Psoas muscle (tissue), 8 donors: ENCODE measurements at regions of chr4 and their contacts with region 1.

Region 1: DNA sequence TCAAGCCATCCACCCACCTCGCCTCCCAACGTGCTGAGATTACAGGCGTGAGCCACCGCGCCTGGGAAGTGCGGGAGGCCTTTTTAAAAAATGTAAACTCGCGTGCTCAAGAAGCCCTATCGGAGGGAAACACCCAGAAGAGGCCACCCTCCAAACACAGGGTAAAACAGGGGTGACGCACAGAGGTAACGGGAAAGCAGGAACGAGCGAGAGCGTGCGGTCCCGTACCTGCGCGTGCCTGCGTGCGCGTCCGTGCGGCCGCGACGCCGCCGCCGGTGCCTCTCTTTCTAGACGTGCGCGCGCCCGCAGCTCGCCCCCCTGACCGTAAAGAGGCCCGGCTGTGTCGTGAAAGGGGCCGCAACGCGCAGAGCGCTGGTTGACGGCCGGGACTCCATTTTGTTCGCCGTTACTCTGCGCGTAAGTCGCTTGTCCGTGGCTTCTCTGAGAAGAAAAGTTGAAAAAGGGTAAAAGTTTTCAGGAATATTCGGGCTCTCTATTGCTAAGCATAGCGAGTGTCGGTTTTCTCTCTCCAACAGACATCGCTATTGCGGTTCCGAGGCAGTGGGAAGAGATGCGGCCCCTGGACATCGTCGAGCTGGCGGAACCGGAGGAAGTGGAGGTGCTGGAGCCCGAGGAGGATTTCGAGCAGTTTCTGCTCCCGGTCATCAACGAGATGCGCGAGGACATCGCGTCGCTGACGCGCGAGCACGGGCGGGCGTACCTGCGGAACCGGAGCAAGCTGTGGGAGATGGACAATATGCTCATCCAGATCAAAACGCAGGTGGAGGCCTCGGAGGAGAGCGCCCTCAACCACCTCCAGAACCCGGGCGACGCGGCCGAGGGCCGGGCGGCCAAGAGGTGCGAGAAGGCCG is at the start of gene MRFAP1:
- DNase-seq: peak; percentile 96 to 97
- ATAC-seq: peak; percentile 92 to 95 (median 94)
- H3K4me3 ChIP-seq: peak within 1 kb of the TSS; percentile 97
- H3K27ac ChIP-seq: peak within 1 kb of the TSS; percentile 90
- H3K4me1 ChIP-seq: peaks cover 23% of the 10 kb centered on the region
- H3K27me3 ChIP-seq: no peaks in the 10 kb centered on the region
- CTCF ChIP-seq: no peak
- total RNA-seq, gene MRFAP1: 216 to 300 (median 250) TPM

Region 2: GRCh38 chr4:6671648-6672530 is 31.4 kb after region 1 on chr4:
- intact Hi-C with region 1: loop called in 1 of 2 experiments (anchors 2 kb)
- DNase-seq: peak in 1 of 2 donors; percentile 49
- ATAC-seq: no peak
- H3K4me3 ChIP-seq: no peak overlapping the region
- H3K27ac ChIP-seq: no peak overlapping the region
- H3K4me1 ChIP-seq: peaks cover 22% of the 10 kb centered on the region
- H3K27me3 ChIP-seq: no peaks in the 10 kb centered on the region
- CTCF ChIP-seq: no peak

Region 3: DNA sequence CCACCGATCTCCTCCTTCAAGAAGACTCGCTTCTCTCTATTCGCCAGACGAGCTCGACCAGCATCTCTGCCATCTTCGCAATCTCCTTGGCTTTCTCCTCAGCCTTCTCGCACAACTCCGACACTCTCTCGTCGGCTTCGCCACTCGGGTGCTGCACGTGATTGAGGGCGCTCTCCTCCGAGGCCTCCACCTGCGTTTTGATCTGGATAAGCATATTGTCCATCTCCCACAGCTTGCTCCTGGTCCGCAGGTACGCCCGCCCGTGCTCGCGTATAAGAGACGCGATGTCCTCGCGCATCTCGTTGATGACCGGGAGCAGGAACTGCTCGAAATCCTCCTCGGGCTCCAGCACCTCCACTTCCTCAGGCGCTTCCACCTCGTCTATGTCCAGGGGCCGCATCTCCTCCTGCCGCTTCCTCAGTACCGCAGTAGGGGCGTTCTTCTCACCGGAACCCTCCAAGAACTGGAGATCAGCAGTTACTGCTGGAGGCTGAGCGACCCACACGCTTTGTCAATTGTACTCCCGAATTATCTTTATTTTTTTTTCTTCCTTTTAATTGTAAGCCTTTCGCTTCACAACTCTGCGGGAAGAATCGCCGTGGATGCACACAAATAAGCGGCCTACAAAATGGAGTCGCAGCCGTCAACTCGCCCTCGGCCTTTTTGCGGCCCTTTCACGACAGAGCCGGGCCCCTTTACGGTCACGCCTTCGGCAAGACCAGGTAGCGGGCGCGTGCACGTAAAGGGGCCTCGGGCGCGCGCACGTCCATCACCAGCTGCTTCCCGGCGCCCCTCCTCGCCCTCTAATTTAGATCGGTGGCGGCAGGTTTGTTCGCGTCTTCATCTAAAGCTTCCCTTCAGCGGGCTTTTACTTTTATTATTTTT is 68.9 kb after region 1 on chr4 and contains the start of gene MRFAP1L1:
- intact Hi-C with region 1: loop called in 1 of 2 experiments (anchors 2 kb)
- DNase-seq: peak; percentile 98
- ATAC-seq: peak; percentile 92 to 95 (median 94)
- H3K4me3 ChIP-seq: peak within 1 kb of the TSS; percentile 97
- H3K27ac ChIP-seq: peak within 1 kb of the TSS; percentile 85
- H3K4me1 ChIP-seq: peaks cover 47% of the 10 kb centered on the region
- H3K27me3 ChIP-seq: no peaks in the 10 kb centered on the region
- CTCF ChIP-seq: peak; percentile 12
- total RNA-seq, gene MRFAP1L1: 30.0 to 39.1 (median 32.4) TPM